Lower leg skin (tissue), 4 donors: ENCODE measurements at regions of chr14 and their contacts with region 1.

Region 1: DNA sequence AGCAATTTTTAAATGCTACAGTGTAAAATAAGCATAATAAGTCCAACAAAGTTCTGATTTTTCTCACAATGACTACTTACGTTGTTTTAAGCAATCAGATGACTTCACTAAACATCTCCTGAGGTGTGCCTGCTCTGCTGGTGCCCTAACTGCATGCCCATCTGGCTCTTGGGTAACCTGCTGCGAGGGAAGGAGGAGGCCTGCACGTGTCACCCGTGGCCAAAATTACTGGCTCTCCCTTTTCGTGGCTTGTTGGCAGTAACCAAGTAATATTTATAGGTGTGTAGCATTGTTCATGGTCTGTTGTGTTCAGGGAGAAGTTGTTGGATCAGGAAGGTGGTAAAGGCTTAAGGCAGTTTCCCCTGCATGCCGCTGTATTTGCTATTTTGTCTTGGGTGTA is 6.3 kb upstream of the NFKBIA start:
- DNase-seq: no peak
- H3K4me3 ChIP-seq: no peak overlapping the region
- CTCF ChIP-seq: no peak
- POLR2A ChIP-seq: no peak

Region 2: DNA sequence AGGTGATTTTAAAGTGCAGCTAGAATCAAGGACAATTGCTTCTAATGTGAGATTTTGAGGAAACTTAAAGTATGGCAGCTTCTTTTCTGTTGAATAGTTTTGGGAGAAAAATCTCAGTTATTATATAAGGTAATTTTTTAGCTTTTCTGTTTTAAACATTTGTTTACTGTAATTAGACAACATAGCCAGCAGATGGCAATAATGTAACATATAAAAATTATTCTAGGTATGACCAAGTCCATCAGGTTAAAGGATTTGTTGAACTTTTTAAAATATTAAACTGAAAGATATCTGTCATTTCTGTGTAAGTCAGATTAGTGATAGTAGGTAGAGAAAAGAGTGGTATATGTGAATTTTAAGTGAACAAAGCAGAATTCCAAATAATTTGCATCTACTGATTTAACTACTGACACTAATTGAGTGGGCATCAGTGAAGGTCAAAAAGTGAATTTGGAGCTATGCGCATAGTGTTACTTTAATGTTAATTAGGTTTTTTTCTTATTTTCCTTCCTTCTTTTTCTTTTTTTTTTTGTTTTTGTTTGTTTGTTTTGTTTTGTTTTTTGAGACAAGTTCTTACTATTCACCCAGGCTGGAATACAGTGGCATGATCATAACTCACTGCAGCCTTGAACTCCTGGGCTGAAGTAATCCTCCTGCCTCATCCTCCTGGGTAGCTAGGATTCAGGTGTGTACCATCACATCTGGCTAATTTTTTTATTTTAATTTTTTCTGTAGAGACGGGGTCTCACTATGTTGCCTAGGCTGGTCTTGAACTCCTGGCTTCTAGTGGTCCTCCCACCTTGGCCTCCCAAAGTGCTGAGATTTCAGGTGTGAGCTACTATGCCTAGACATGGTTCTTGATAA is 269.9 kb before region 1 on chr14:
- intact Hi-C with region 1: loop called (anchors 2 kb)
- DNase-seq: no peak
- H3K4me3 ChIP-seq: no peak overlapping the region
- CTCF ChIP-seq: no peak
- POLR2A ChIP-seq: no peak

Region 3: DNA sequence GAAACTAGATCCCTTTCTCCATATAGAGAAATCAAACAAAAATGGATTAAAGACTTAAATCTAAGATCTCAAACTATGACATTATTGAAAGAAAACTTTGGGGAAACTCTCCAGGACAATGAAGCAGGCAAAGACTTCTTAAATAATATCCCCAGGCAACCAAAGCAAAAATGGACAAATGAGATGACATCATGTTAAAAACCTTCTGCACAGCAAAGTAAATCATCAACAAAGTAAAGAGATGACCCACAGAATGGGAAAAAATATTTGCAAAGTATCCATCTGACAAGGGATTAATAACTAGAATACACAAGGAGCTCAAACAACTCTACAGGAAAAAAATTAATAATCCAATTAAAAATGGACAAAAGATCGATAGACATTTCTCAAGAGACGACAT is 297.2 kb after region 1 on chr14:
- intact Hi-C with region 1: no loop called
- DNase-seq: no peak
- H3K4me3 ChIP-seq: no peak overlapping the region
- CTCF ChIP-seq: no peak
- POLR2A ChIP-seq: no peak